ENCODE measurements at regions of chr6 and their contacts with region 1.

Region 1: DNA sequence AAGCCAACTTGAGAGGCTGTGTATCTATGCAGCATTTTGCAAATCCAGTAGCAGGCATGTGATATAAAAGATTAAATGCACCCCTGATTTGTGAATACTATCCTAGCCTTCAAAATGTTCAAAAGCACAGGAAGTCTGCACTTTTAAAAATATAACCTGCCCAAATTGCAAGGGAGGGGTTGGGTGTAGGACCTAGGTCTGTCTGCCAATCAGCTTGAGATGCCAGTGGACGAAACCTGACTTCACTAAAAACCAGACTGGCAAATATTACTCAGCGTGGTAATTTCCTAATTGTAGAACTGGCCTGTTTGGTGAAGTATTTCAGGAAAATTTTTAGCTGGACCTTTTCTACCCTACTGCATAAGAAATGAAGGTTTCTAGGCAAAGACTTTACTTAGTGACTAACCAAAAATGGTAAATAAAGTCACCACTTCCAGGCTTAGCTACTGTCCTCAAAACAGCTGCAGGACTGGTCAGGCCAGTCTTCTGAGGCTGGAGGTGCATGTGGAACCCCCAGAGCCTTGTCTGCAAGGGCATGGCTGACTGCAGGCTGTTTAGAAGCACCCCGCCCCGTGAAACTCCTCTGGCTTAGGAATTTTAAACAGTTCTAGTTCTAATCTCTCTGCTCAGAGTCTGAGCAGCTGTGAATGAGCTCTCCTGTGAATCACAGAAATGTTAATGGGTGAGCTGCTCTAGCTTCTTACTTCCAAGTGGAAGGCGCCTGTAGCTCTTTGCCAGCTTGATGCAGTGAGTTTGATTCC is 104.5 kb upstream of the ESR1 start:
- DNase-seq: no peak
- H3K4me3 Mint-ChIP-seq: no peak overlapping the region
- H3K27ac Mint-ChIP-seq: peak overlapping the region; percentile 59
- H3K4me1 Mint-ChIP-seq: peaks cover 56% of the 10 kb centered on the region
- H3K27me3 Mint-ChIP-seq: peaks cover 10% of the 10 kb centered on the region

Region 2: GRCh38 chr6:151661928-151662327 is 41.1 kb before region 1 on chr6:
- intact Hi-C with region 1: no loop called
- DNase-seq: no peak
- H3K4me3 Mint-ChIP-seq: no peak overlapping the region
- H3K27ac Mint-ChIP-seq: no peak overlapping the region
- H3K4me1 Mint-ChIP-seq: no peaks in the 10 kb centered on the region
- H3K27me3 Mint-ChIP-seq: peaks cover 14% of the 10 kb centered on the region

Region 3: GRCh38 chr6:151690768-151691562 is 12.1 kb before region 1 on chr6:
- intact Hi-C with region 1: loop called (anchors 1 kb)
- DNase-seq: peak; percentile 45
- H3K4me3 Mint-ChIP-seq: peak overlapping the region; percentile 78
- H3K27ac Mint-ChIP-seq: peak overlapping the region; percentile 64
- H3K4me1 Mint-ChIP-seq: peaks cover 30% of the 10 kb centered on the region
- H3K27me3 Mint-ChIP-seq: peaks cover 10% of the 10 kb centered on the region

Region 4: GRCh38 chr6:151757506-151758245 is 54.6 kb after region 1 on chr6:
- intact Hi-C with region 1: loop called (anchors 1 kb)
- DNase-seq: peak; percentile 53
- H3K4me3 Mint-ChIP-seq: peak overlapping the region; percentile 38
- H3K27ac Mint-ChIP-seq: peak overlapping the region; percentile 97
- H3K4me1 Mint-ChIP-seq: peaks cover 63% of the 10 kb centered on the region
- H3K27me3 Mint-ChIP-seq: no peaks in the 10 kb centered on the region

Region 5: GRCh38 chr6:151962246-151962846 is 259.3 kb after region 1 on chr6:
- intact Hi-C with region 1: loop called (anchors 5 kb)
- DNase-seq: peak; percentile 25
- H3K4me3 Mint-ChIP-seq: no peak overlapping the region
- H3K27ac Mint-ChIP-seq: peak overlapping the region; percentile 64
- H3K4me1 Mint-ChIP-seq: peaks cover 22% of the 10 kb centered on the region
- H3K27me3 Mint-ChIP-seq: peaks cover 36% of the 10 kb centered on the region

Region 6: GRCh38 chr6:152184917-152185574 is 482.0 kb after region 1 on chr6:
- intact Hi-C with region 1: loop called (anchors 1 kb)
- DNase-seq: peak; percentile 10
- H3K4me3 Mint-ChIP-seq: peak overlapping the region; percentile 88
- H3K27ac Mint-ChIP-seq: peak overlapping the region; percentile 97
- H3K4me1 Mint-ChIP-seq: peaks cover 66% of the 10 kb centered on the region
- H3K27me3 Mint-ChIP-seq: no peaks in the 10 kb centered on the region

Measured in activated T-helper 1 cell treated with anti-CD3 and anti-CD28 coated beads, Interleukin-12 subunit alpha, Interleukin-12 subunit beta, Interleukin-2, Interleukin-4 antibody, amounts not matched to agents 30 ng/mL and 10 ng/mL and 1 ng/mL, durations not matched to agents 14 hours and 24 hours and 36 hours (primary cell).